MCF 10A (cell line): ENCODE measurements at regions of chr6 and their contacts with region 1.

Region 1: DNA sequence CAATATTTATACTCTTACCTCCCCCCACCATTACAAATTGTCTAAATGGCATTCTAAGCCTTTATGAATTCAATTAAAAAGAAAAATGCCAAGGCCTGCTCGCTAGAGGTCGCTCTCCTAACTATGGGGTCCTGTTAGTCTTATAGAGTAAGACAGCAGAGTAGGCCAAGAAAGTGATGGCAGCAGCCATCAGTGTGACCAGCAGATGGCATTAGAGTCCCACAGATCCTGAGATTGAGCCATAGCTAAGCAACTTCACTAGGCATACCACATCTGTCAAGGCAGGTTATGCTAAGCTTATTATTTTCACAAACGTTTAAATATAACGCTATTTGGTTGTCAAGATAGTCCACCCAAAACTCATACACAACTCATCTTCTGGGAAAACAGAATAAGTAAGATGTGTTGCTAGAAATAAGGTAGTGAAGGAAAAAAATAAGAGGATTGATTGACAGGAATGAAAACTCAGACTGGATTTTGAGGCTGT is 57.6 kb upstream of the SCAF8 start:
- DNase-seq: peak; percentile 93
- H3K4me3 Mint-ChIP-seq: no peak overlapping the region
- H3K27ac Mint-ChIP-seq: no peak overlapping the region
- H3K4me1 Mint-ChIP-seq: no peaks in the 10 kb centered on the region
- H3K27me3 Mint-ChIP-seq: no peaks in the 10 kb centered on the region
- CTCF ChIP-seq: peak; percentile 98

Region 2: DNA sequence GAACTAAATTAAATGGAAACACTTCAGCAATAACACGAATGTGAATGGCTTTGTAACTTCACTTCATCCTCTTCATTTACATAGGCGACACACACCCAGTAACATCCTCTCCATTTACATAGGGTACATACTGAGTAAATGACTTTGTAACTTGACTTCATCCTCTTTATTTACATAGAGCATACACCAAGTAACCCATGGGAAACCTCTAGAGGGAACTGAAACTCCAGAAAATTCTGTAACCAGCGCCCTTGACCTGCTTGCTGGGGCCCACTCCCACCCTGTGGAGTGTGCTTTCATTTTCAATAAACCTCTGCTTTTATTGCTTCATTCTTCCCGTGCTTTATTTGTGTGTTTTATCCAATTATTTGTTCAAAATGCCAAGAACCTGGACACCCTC is 718.3 kb before region 1 on chr6:
- CTCF ChIA-PET with region 1: no interaction called
- POLR2A ChIA-PET with region 1: no interaction called
- intact Hi-C with region 1: no loop called
- DNase-seq: no peak
- H3K4me3 Mint-ChIP-seq: no peak overlapping the region
- H3K27ac Mint-ChIP-seq: no peak overlapping the region
- H3K4me1 Mint-ChIP-seq: peaks cover 6% of the 10 kb centered on the region
- H3K27me3 Mint-ChIP-seq: peaks cover 3% of the 10 kb centered on the region
- CTCF ChIP-seq: no peak

Region 3: DNA sequence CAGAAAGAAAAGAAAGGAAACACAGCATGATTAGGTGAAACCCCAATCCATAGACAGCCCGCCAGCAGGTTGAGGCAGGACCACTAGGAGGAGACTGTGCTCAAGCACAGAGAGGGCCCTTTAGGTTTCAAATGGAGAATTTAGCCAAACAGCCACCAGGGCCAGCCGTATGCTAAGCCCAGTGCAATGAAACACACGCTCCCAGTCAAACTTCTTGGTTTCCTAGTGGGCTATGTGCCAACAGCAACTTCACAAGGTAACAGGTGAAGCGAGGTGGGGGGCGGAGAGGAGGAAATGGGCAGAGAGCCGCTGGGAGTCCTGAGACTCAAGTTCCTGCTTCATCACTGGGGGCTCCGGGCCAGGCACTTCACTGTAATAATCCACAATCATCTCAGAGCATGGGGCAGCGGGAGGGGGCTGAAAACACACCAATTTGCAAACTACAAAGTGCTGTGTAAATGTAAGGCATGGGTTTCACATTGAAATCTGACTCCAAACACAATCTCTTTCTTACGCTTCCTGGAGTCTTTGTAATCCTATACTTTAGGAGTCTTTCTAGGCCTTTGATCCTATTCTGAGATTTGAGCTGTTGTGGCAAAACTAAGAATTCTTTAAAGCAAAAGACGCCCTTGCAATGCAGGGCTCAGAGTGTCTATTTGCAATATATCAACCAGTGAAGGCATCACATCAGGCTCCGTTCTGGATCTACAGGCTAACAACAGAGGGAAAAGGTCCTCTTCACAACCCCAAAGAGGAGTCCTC is 519.3 kb before region 1 on chr6:
- CTCF ChIA-PET with region 1: interaction called, 10 read pairs
- POLR2A ChIA-PET with region 1: no interaction called
- intact Hi-C with region 1: loop called (anchors 1 kb)
- DNase-seq: peak; percentile 57
- H3K4me3 Mint-ChIP-seq: no peak overlapping the region
- H3K27ac Mint-ChIP-seq: no peak overlapping the region
- H3K4me1 Mint-ChIP-seq: peaks cover 4% of the 10 kb centered on the region
- H3K27me3 Mint-ChIP-seq: no peaks in the 10 kb centered on the region
- CTCF ChIP-seq: peak; percentile 51

Region 4: GRCh38 chr6:154690857-154691256 is 15.2 kb after region 1 on chr6:
- CTCF ChIA-PET with region 1: interaction called, 17 read pairs
- POLR2A ChIA-PET with region 1: no interaction called
- intact Hi-C with region 1: no loop called
- DNase-seq: no peak
- H3K4me3 Mint-ChIP-seq: no peak overlapping the region
- H3K27ac Mint-ChIP-seq: no peak overlapping the region
- H3K4me1 Mint-ChIP-seq: no peaks in the 10 kb centered on the region
- H3K27me3 Mint-ChIP-seq: no peaks in the 10 kb centered on the region
- CTCF ChIP-seq: no peak

Region 5: GRCh38 chr6:154805288-154805911 is 129.8 kb after region 1 on chr6:
- CTCF ChIA-PET with region 1: interaction called, 140 read pairs
- POLR2A ChIA-PET with region 1: interaction called, 10 read pairs
- intact Hi-C with region 1: loop called (anchors 1 kb)
- DNase-seq: peak; percentile 47
- H3K4me3 Mint-ChIP-seq: no peak overlapping the region
- H3K27ac Mint-ChIP-seq: no peak overlapping the region
- H3K4me1 Mint-ChIP-seq: peaks cover under 1% of the 10 kb centered on the region
- H3K27me3 Mint-ChIP-seq: no peaks in the 10 kb centered on the region
- CTCF ChIP-seq: peak; percentile 49

Region 6: DNA sequence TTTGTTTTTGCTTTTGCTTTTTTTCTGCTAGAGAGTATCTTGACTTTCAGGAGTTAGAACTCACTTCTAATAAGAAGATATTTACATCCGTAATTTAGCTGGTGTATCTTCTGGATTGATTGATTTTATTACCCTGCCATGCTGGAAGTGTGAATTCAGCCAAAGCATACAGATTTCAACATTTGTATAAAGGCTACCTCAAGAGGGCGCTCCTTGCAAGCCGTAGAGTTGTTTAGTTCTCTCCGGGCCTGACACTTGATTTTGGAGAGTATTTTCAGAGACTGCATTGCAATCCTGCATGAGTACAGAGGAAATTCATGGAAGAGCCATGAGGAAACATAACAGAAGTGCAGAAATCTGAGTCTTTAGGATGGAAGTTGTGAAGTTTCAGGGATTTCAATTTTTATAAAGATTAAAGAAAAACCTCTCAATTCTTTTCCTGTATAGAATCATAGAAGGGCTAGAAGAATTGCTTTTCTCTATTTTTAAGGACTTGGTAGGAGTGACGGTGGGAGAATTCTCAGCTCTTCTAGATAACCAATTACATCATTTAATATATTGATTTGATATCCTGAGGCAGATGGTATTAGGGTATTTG is 252.8 kb after region 1 on chr6:
- CTCF ChIA-PET with region 1: interaction called, 6 read pairs
- POLR2A ChIA-PET with region 1: interaction called, 3 read pairs
- intact Hi-C with region 1: loop called (anchors 1 kb)
- DNase-seq: peak; percentile 77
- H3K4me3 Mint-ChIP-seq: no peak overlapping the region
- H3K27ac Mint-ChIP-seq: no peak overlapping the region
- H3K4me1 Mint-ChIP-seq: peaks cover 24% of the 10 kb centered on the region
- H3K27me3 Mint-ChIP-seq: no peaks in the 10 kb centered on the region
- CTCF ChIP-seq: peak; percentile 84

Region 7: DNA sequence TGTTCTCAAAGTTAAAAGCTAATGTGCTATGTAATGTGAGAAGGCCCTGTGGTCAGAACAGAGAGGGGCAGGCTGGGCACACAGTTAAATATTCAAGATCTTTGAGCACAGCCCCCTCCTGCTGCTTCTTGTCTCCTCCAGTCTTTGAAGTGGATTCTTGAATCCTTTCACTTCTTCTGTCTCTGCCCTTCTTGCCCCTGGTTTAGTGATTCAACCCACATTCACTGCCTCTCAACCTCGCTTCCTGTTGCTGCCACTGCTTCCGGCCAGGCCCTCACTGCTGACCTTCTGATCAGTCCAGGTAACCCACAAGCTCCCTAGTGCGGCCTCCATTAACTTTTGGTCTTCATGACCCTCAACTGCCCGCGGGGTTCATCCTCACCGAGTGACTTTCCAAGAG is 1197.3 kb after region 1 on chr6:
- CTCF ChIA-PET with region 1: no interaction called
- POLR2A ChIA-PET with region 1: no interaction called
- intact Hi-C with region 1: no loop called
- DNase-seq: no peak
- H3K4me3 Mint-ChIP-seq: no peak overlapping the region
- H3K27ac Mint-ChIP-seq: no peak overlapping the region
- H3K4me1 Mint-ChIP-seq: no peaks in the 10 kb centered on the region
- H3K27me3 Mint-ChIP-seq: no peaks in the 10 kb centered on the region
- CTCF ChIP-seq: no peak